ENCODE measurements at regions of chr9 and their contacts with region 1.

Region 1: GRCh38 chr9:1253064-1253979 is 203.2 kb downstream of the DMRT2 start:
- DNase-seq: no peak
- ATAC-seq: no peak
- H3K4me3 ChIP-seq: no peak overlapping the region
- H3K27ac ChIP-seq: no peak overlapping the region
- H3K4me1 ChIP-seq: peaks cover 3% of the 10 kb centered on the region
- H3K27me3 ChIP-seq: no peaks in the 10 kb centered on the region
- CTCF ChIP-seq: no peak

Region 2: GRCh38 chr9:1115370-1115769 is 138.0 kb before region 1 on chr9:
- intact Hi-C with region 1: loop called in 1 of 2 experiments (anchors 10 kb)
- DNase-seq: no peak
- ATAC-seq: no peak
- H3K4me3 ChIP-seq: no peak overlapping the region
- H3K27ac ChIP-seq: no peak overlapping the region
- H3K4me1 ChIP-seq: no peaks in the 10 kb centered on the region
- H3K27me3 ChIP-seq: no peaks in the 10 kb centered on the region
- CTCF ChIP-seq: no peak

Measured in psoas muscle (tissue), 8 donors.